ENCODE measurements at regions of chr3 and their contacts with region 1.

Region 1: DNA sequence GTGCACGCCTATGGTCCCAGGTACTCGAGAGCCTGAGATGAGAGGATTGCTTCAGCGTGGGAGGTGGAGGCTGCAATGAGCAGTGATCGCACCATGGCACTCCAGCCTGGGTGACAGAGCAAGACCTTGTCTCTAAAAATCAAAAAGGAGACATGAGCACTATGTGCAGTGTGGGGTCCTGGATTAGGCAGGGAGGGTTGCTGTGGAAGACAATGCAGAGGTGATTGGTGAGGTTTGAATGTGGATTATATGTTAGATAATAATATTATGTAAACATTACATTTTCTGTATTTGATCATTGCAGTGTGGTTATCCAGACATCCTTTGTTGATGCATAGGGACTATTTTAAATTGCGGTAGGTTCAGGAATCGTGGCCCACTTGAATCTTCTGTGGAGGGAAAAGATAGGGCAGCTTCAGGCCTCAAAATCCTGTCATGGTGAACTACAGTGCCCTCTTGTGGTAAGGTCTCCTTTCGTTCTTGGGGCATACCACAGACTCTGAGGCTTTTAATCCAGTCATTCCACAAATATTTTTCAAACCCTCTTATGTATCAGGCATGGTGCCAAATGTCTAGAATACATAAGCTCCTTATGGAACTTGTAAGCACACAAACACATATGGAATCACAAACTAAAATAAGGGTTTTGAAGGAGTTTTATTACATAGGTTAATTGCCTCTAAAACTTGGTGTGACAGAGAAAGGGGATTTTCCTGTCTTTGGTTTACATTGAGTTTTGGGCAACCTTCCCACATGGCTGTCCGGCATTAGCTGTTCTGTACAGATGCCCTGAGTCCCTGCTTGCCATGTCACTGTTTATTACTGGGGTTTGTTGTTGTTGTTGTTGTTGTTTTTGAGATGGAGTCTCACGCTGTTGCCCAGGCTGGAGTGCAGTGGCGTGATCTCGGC is 37.7 kb downstream of the GPD1L start:
- DNase-seq: peak; percentile 33 to 34
- ATAC-seq: peak; percentile 86 to 87
- H3K4me3 ChIP-seq: no peak overlapping the region
- H3K27ac ChIP-seq: peak overlapping the region in 1 of 4 donors; percentile 17
- H3K4me1 ChIP-seq: peaks cover 0 to 6% of the 10 kb centered on the region in 2 donors
- H3K27me3 ChIP-seq: no peaks in the 10 kb centered on the region
- CTCF ChIP-seq: peak; percentile 81 to 88 (median 85)
- POLR2A ChIP-seq: no peak

Region 2: GRCh38 chr3:32018757-32019564 is 125.1 kb before region 1 on chr3:
- in situ Hi-C with region 1: loop called (anchors 5 kb)
- intact Hi-C with region 1: loop called (anchors 1 kb)
- DNase-seq: no peak
- ATAC-seq: peak; percentile 75 to 91
- H3K4me3 ChIP-seq: no peak overlapping the region
- H3K27ac ChIP-seq: no peak overlapping the region
- H3K4me1 ChIP-seq: no peaks in the 10 kb centered on the region
- H3K27me3 ChIP-seq: no peaks in the 10 kb centered on the region
- CTCF ChIP-seq: peak; percentile 75 to 84 (median 79)
- POLR2A ChIP-seq: no peak

Region 3: GRCh38 chr3:32037929-32038267 is 106.2 kb before region 1 on chr3:
- in situ Hi-C with region 1: no loop called
- intact Hi-C with region 1: loop called (anchors 5 kb)
- DNase-seq: no peak
- ATAC-seq: peak; percentile 15 to 27
- H3K4me3 ChIP-seq: no peak overlapping the region
- H3K27ac ChIP-seq: peak overlapping the region; percentile 21 to 82 (median 70)
- H3K4me1 ChIP-seq: peaks cover 29 to 33% of the 10 kb centered on the region in 2 donors
- H3K27me3 ChIP-seq: no peaks in the 10 kb centered on the region
- CTCF ChIP-seq: no peak
- POLR2A ChIP-seq: no peak

Region 4: DNA sequence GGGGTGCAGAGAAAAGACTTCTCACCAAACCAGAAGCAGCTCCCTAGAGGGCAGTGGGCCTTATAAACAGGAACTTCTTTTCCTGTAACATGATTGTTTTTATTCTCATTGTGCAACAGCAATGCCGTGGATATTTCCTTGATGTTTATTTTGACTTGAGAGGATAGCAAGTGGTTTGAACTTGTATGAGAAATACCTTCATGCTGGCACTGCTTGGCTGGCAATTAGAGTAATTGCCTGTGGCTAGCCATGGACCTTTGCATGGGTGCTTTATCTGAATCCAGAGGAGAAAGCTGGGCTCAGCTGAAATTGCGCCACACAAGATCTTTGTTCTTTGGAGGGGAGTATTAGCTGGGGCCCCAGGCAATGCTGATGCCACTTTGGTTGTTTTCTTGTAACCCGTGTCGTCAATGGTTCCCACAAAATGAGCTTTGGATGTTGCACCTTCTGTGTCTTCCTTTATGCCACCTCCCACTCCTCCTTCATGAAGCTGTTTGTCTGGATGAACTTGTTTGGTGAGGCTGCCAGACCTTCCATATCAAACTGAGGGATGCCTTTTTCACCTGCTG is 132.3 kb after region 1 on chr3:
- in situ Hi-C with region 1: no loop called
- intact Hi-C with region 1: no loop called
- DNase-seq: no peak
- ATAC-seq: no peak
- H3K4me3 ChIP-seq: no peak overlapping the region
- H3K27ac ChIP-seq: peak overlapping the region in 1 of 4 donors; percentile 14
- H3K4me1 ChIP-seq: no peaks in the 10 kb centered on the region
- H3K27me3 ChIP-seq: no peaks in the 10 kb centered on the region
- CTCF ChIP-seq: no peak
- POLR2A ChIP-seq: no peak

Region 5: GRCh38 chr3:32401556-32402081 is 257.5 kb after region 1 on chr3:
- in situ Hi-C with region 1: no loop called
- intact Hi-C with region 1: no loop called
- DNase-seq: peak; percentile 50 to 66
- ATAC-seq: peak; percentile 75 to 89
- H3K4me3 ChIP-seq: peak overlapping the region; percentile 44 to 73 (median 61)
- H3K27ac ChIP-seq: peak overlapping the region; percentile 56 to 85 (median 76)
- H3K4me1 ChIP-seq: peaks cover 8% of the 10 kb centered on the region in 2 donors
- H3K27me3 ChIP-seq: no peaks in the 10 kb centered on the region
- CTCF ChIP-seq: peak in 1 of 5 experiments; percentile 15
- POLR2A ChIP-seq: peak in 1 of 2 donors; percentile 16

Measured in gastrocnemius medialis (tissue), 4 donors.